AG04449 (cell line): ENCODE measurements at regions of chr5 and their contacts with region 1.

Region 1: GRCh38 chr5:168947212-168947868 is 353.6 kb downstream of the SLIT3 start:
- DNase-seq: no peak
- H3K4me3 ChIP-seq: no peak overlapping the region
- CTCF ChIP-seq: peak; percentile 94

Region 2: GRCh38 chr5:168244838-168245559 is 702.3 kb before region 1 on chr5:
- CTCF ChIA-PET with region 1: no interaction called
- POLR2A ChIA-PET with region 1: no interaction called
- DNase-seq: no peak
- H3K4me3 ChIP-seq: no peak overlapping the region
- CTCF ChIP-seq: no peak

Region 3: DNA sequence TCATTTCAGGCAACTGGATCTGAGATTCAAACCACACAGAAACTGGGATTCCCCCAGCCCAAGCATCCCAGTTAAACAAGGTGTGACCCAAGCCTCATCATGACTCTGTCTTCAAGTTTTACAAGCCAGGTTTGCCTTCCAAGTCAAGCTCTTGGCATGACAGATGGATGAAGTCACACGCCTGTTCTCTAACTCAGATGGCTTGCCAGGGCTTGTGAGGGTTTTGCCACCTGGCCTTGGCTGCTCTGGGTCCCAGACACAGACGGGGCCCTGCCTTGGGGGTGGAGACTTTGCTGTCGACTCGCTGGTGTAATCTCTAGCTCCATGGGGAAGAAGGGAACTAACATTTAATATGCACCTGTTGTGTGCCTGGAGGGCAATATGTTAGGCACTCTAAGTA is 556.8 kb before region 1 on chr5:
- CTCF ChIA-PET with region 1: no interaction called
- POLR2A ChIA-PET with region 1: no interaction called
- DNase-seq: no peak
- H3K4me3 ChIP-seq: no peak overlapping the region
- CTCF ChIP-seq: no peak

Region 4: DNA sequence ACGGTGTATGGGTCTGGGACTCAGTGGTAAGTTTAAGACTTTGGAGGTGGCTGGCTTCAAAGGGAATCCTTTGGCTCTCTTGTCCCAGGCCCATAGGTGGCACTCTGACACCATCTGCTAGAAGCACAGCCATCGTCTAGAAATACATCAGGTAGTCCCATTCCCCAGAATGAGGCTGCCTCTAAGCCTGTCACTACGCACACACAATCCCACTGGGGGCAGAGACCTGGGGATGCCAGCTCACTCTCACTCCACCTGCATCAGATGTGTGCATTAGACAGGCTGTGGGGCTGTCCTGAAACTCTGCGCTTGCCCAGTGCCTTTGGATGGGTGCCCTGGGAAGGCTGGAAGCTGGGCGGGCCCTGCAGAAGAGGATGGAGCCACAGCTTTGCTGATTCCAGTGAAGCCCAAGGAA is 240.7 kb before region 1 on chr5:
- CTCF ChIA-PET with region 1: interaction called, 10 read pairs
- POLR2A ChIA-PET with region 1: no interaction called
- DNase-seq: no peak
- H3K4me3 ChIP-seq: no peak overlapping the region
- CTCF ChIP-seq: peak; percentile 79

Region 5: GRCh38 chr5:168936511-168936910 is 10.8 kb before region 1 on chr5:
- CTCF ChIA-PET with region 1: interaction called, 19 read pairs
- POLR2A ChIA-PET with region 1: no interaction called
- DNase-seq: no peak
- H3K4me3 ChIP-seq: no peak overlapping the region
- CTCF ChIP-seq: no peak

Region 6: GRCh38 chr5:168962306-168962705 is 15.0 kb after region 1 on chr5:
- CTCF ChIA-PET with region 1: interaction called, 52 read pairs
- POLR2A ChIA-PET with region 1: no interaction called
- DNase-seq: no peak
- H3K4me3 ChIP-seq: no peak overlapping the region
- CTCF ChIP-seq: no peak

Region 7: DNA sequence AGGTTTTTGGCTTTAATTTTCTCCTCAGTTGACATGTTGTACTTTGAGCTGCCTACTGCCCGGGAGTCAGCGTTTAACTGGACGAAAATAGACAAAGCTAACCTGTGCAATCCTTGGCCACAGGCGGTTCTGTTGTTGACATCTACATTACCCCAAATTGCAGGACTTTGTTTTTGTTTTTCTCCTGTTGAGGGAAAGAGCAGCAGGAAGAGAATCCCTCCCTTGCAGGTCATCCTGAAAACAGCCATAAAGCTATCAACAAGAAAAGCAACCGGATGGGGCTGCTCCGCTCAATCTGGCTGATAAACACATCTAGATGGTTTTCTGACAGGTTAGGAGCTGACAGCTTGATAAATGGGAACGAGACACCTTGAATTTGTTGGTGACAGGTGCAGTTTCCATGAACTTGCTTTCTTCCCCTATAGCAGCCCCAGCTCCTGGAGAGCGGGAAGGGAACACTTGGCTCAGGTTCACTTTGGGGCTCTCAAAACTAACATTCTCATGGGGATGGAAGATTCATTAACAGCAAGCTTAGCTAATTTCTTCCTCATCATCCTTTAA is 22.1 kb after region 1 on chr5:
- CTCF ChIA-PET with region 1: interaction called, 12 read pairs
- POLR2A ChIA-PET with region 1: no interaction called
- DNase-seq: no peak
- H3K4me3 ChIP-seq: no peak overlapping the region
- CTCF ChIP-seq: no peak

Region 8: DNA sequence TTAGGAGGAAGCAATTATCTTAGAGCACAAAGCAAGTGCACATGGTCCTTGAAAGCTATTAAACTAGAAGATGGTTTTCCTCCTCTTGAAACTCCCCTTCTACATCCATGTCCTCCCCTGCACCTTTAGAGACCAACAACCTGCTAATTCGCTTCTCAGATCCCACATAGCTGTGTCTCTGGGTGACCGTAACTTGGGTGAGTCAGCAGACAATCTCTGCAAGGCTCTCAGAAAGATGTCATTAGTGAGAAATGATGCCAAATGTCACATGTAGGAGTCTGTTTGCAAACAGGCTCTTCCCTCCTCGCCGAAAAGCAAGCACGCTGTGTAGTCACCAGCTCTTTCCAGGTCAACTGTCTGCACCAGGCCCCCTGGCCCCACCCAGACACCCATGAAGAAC is 61.8 kb after region 1 on chr5:
- CTCF ChIA-PET with region 1: no interaction called
- POLR2A ChIA-PET with region 1: no interaction called
- DNase-seq: no peak
- H3K4me3 ChIP-seq: no peak overlapping the region
- CTCF ChIP-seq: no peak

Region 9: DNA sequence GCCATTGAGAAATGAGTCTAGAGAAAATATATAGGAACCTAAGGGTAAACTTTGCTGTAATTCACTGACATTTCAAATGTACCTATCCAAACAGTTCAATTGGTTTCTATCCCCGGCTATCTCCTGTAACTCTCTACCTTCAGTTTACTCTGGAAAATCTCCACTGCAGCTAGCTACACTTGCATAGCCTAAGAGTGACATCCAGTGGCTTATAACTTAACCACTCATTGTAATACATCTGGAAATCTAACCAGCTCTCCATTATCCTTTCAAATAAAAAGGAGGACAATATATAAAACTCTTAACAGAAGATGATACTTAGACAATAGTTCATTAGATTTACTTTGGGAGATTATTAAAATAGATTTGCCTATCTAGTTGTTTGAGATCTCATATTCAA is 601.0 kb after region 1 on chr5:
- CTCF ChIA-PET with region 1: interaction called, 27 read pairs
- POLR2A ChIA-PET with region 1: no interaction called
- DNase-seq: no peak
- H3K4me3 ChIP-seq: no peak overlapping the region
- CTCF ChIP-seq: peak; percentile 32